Activated T-helper 1 cell treated with anti-CD3 and anti-CD28 coated beads, Interleukin-12 subunit alpha, Interleukin-12 subunit beta, Interleukin-2, Interleukin-4 antibody, amounts not matched to agents 30 ng/mL and 10 ng/mL and 1 ng/mL, durations not matched to agents 14 hours and 24 hours and 36 hours (primary cell): ENCODE measurements at regions of chr6 and their contacts with region 1.

Region 1: GRCh38 chr6:42901536-42901957 is 14.3 kb upstream of the PTCRA start:
- DNase-seq: peak; percentile 72
- H3K4me3 Mint-ChIP-seq: no peak overlapping the region
- H3K27ac Mint-ChIP-seq: no peak overlapping the region
- H3K4me1 Mint-ChIP-seq: peaks cover 19% of the 10 kb centered on the region
- H3K27me3 Mint-ChIP-seq: no peaks in the 10 kb centered on the region

Region 2: DNA sequence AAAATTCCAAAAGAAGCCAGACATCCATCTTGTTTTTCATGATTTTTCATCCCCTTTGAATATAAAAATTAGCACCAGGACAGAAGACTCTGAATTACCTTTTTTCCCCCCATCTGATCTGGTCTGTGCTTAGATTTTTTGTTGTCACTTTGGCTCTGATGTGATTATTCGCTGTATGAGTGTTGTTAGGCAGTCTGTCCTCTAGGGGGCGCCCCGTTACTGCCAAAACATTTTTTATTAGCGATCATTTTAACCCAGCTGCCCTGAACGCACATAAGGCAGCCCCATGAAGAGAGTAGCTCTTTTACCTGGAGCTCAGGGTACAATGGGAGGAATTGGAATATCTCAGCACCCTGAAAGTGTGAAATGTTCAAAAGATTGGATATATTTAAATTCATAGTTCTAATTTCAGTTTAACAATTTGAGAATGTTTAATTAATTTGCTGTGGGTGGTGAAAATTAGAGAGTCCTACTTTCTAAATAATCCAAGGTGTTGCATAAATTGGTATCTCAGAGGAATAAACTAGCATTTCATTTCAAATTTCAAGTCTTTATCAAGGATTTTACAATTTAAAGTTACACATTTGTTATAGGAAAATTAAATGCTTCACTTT is 239.9 kb before region 1 on chr6:
- intact Hi-C with region 1: loop called (anchors 1 kb)
- DNase-seq: peak; percentile 62
- H3K4me3 Mint-ChIP-seq: no peak overlapping the region
- H3K27ac Mint-ChIP-seq: no peak overlapping the region
- H3K4me1 Mint-ChIP-seq: peaks cover 6% of the 10 kb centered on the region
- H3K27me3 Mint-ChIP-seq: no peaks in the 10 kb centered on the region

Region 3: GRCh38 chr6:42879372-42880239 is 21.9 kb before region 1 on chr6 and contains the start of gene RPL7L1:
- intact Hi-C with region 1: loop called (anchors 1 kb)
- DNase-seq: peak; percentile 82
- H3K4me3 Mint-ChIP-seq: peak within 1 kb of the TSS; percentile 96
- H3K27ac Mint-ChIP-seq: peak within 1 kb of the TSS; percentile 97
- H3K4me1 Mint-ChIP-seq: peaks cover 30% of the 10 kb centered on the region
- H3K27me3 Mint-ChIP-seq: no peaks in the 10 kb centered on the region
- total RNA-seq, gene RPL7L1: 179 TPM in 2 replicates

Region 4: GRCh38 chr6:42928986-42929820 is 27.7 kb after region 1 on chr6 and contains the start of gene CNPY3:
- intact Hi-C with region 1: loop called (anchors 1 kb)
- DNase-seq: peak; percentile 93
- H3K4me3 Mint-ChIP-seq: peak within 1 kb of the TSS; percentile 99
- H3K27ac Mint-ChIP-seq: peak within 1 kb of the TSS; percentile 98
- H3K4me1 Mint-ChIP-seq: peaks cover 38% of the 10 kb centered on the region
- H3K27me3 Mint-ChIP-seq: no peaks in the 10 kb centered on the region
- total RNA-seq, gene CNPY3: 47.2 and 49.2 TPM in 2 replicates

Region 5: GRCh38 chr6:42978839-42979522 is 77.4 kb after region 1 on chr6 and contains the start of gene PEX6:
- intact Hi-C with region 1: loop called (anchors 1 kb)
- DNase-seq: peak; percentile 94
- H3K4me3 Mint-ChIP-seq: peak within 1 kb of the TSS; percentile 91
- H3K27ac Mint-ChIP-seq: peak within 1 kb of the TSS; percentile 96
- H3K4me1 Mint-ChIP-seq: peaks cover 38% of the 10 kb centered on the region
- H3K27me3 Mint-ChIP-seq: no peaks in the 10 kb centered on the region
- total RNA-seq, gene PEX6: 20.9 TPM in 2 replicates

Region 6: DNA sequence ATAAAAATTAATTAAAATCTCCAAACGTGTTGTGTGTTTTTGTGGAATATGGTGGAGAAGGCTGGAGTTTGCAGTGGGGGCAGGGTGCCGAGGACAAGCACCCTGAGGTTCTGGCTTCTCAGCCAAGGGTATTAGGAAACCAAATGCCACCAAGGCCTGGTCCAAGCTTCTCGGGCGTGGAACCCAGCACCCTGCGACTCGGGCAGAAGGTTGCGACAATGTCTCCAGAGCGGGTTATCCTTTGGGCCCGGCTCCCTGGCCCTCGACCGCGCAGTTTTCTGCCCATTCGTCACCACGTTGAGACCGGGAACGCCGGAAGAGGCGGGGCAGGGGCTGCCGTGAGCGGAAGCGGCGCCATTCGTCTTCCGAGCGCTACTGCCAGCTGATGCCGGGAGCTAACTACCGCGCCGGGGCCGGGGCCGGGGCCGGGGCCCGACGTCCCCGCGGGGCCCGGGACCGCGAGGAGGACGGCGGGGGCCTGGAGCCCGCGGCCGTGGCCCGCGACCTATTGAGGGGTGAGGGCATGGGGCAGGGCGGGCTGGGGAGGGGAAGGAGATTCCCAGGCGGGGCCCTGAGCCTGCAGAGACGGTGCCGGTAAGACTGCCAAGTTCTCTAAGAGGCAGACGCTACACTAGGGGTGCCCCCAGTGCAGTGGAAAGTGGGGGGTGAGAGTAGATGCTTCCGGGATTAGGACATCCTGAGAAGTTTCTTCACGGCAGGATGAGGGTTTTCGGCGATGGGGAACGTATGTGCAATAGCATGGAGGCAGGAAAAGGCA is 119.9 kb after region 1 on chr6 and contains the start of gene RRP36:
- intact Hi-C with region 1: loop called (anchors 2 kb)
- DNase-seq: peak; percentile 64
- H3K4me3 Mint-ChIP-seq: peak within 1 kb of the TSS; percentile 98
- H3K27ac Mint-ChIP-seq: peak within 1 kb of the TSS; percentile 87
- H3K4me1 Mint-ChIP-seq: peaks cover 34% of the 10 kb centered on the region
- H3K27me3 Mint-ChIP-seq: no peaks in the 10 kb centered on the region
- total RNA-seq, gene RRP36: 86.1 and 89.9 TPM in 2 replicates

Region 7: DNA sequence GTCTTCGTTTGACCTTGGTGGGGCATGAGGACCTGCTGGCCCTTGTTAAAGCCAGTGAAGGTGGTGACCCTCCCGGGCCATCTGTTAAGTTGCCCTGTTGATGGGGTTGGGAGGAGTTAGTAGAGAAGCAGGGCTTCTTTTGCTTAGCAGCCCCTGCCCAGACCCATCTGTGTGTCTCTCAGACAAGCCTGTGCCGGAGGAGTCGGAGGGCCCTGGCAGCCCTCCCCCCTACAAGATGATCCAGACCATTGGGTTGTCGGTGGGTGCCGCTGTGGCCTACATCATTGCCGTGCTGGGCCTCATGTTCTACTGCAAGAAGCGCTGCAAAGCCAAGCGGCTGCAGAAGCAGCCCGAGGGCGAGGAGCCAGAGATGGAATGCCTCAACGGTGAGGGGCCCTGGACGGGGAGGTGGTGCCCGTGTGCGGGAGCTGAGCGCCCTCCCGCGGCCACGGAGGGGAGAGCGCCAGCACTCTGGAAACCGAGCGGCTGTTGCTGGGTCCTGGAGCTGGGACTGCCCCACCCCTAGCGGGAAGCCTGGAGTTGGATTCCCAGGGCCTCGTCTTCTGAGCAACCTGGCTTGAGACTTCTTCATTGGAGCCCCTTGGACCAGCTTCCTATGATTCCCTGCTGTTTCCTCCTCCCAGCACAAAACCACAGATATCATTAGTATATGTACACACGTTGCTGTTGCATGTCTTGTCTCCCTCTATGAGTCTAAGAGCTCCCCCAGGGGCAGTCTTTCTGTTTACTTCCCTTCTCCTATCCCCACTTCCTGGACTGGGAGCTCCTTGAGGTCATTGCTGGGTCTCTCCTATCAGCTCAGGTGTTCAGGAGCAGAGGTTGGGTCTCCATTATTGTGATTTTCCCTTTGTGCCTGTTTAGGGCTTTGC is 241.9 kb after region 1 on chr6:
- intact Hi-C with region 1: loop called (anchors 1 kb)
- DNase-seq: peak; percentile 63
- H3K4me3 Mint-ChIP-seq: no peak overlapping the region
- H3K27ac Mint-ChIP-seq: peak overlapping the region; percentile 14
- H3K4me1 Mint-ChIP-seq: no peaks in the 10 kb centered on the region
- H3K27me3 Mint-ChIP-seq: no peaks in the 10 kb centered on the region